ENCODE measurements at regions of chr10 and their contacts with region 1.

Region 1: DNA sequence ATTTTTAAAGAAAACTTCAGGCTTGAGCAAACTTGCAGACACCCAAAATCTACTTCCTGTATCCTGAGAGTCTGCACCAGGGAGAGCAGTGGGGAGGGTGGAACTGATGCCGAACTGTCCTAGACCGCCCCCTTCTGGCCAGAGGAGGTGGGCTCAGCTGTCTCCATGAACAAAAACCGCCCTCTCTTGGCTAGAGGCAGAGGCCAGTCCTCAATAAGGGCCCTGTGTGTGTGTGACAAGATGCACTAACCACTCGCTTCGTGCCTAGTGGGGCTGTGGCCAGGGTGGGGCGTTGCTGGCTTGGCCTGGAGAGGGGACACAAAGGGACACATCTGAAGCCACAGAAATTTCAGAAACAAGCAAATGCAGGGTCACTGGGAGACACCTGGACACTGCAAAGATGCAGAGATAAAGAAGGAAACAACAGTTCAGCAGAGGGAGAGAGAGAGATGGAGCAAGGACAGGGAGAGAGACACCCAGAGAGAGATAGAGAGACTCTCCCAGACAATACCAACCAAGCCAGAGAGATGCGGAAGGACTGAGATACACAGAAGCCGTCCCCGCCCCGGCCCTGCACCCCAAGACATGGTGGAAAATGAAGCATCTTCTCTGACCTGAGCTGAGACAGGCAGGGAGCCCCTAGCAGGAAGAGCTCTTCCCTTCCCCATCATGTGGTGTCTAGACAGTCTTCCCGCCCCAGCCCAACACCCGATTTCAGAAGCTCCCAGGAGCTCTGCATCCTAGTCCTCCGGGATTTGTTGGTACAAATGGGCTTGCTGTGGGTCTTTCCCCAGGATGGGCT is 22.7 kb upstream of the FXYD4 start:
- DNase-seq: peak; percentile 74 to 85
- ATAC-seq: peak; percentile 91 to 93 (median 92)
- H3K4me3 ChIP-seq: no peak overlapping the region
- H3K27ac ChIP-seq: no peak overlapping the region
- H3K4me1 ChIP-seq: no peaks in the 10 kb centered on the region
- H3K27me3 ChIP-seq: peaks cover 0 to 12% (median 0%) of the 10 kb centered on the region in 3 donors
- CTCF ChIP-seq: peak; percentile 73

Region 2: GRCh38 chr10:43292755-43293676 is 55.7 kb before region 1 on chr10:
- intact Hi-C with region 1: loop called in 1 of 2 experiments (anchors 2 kb)
- DNase-seq: peak; percentile 39 to 63
- ATAC-seq: peak; percentile 79 to 93 (median 85)
- H3K4me3 ChIP-seq: peak overlapping the region; percentile 16
- H3K27ac ChIP-seq: no peak overlapping the region
- H3K4me1 ChIP-seq: no peaks in the 10 kb centered on the region
- H3K27me3 ChIP-seq: peaks cover 0 to 4% (median 0%) of the 10 kb centered on the region in 3 donors
- CTCF ChIP-seq: peak; percentile 73

Region 3: GRCh38 chr10:43407576-43408330 is 59.0 kb after region 1 on chr10:
- intact Hi-C with region 1: loop called in 1 of 2 experiments (anchors 2 kb)
- DNase-seq: peak; percentile 90 to 93
- ATAC-seq: peak; percentile 68 to 80 (median 76)
- H3K4me3 ChIP-seq: peak overlapping the region; percentile 86
- H3K27ac ChIP-seq: peak overlapping the region; percentile 99
- H3K4me1 ChIP-seq: peaks cover 38% of the 10 kb centered on the region
- H3K27me3 ChIP-seq: no peaks in the 10 kb centered on the region
- CTCF ChIP-seq: peak; percentile 21

Region 4: GRCh38 chr10:43735907-43736306 is 387.2 kb after region 1 on chr10:
- intact Hi-C with region 1: no loop called
- DNase-seq: no peak
- ATAC-seq: no peak
- H3K4me3 ChIP-seq: no peak overlapping the region
- H3K27ac ChIP-seq: no peak overlapping the region
- H3K4me1 ChIP-seq: no peaks in the 10 kb centered on the region
- H3K27me3 ChIP-seq: no peaks in the 10 kb centered on the region
- CTCF ChIP-seq: no peak